MCF 10A (cell line): ENCODE measurements at regions of chr11 and their contacts with region 1.

Region 1: GRCh38 chr11:45110562-45110961 is 35.9 kb upstream of the PRDM11 start:
- DNase-seq: peak; percentile 81
- H3K4me3 Mint-ChIP-seq: no peak overlapping the region
- H3K27ac Mint-ChIP-seq: no peak overlapping the region
- H3K4me1 Mint-ChIP-seq: no peaks in the 10 kb centered on the region
- H3K27me3 Mint-ChIP-seq: peaks cover 32% of the 10 kb centered on the region
- CTCF ChIP-seq: peak; percentile 61

Region 2: GRCh38 chr11:45133871-45134270 is 23.3 kb after region 1 on chr11:
- CTCF ChIA-PET with region 1: interaction called, 10 read pairs
- POLR2A ChIA-PET with region 1: no interaction called
- intact Hi-C with region 1: no loop called
- DNase-seq: peak; percentile 38
- H3K4me3 Mint-ChIP-seq: no peak overlapping the region
- H3K27ac Mint-ChIP-seq: no peak overlapping the region
- H3K4me1 Mint-ChIP-seq: no peaks in the 10 kb centered on the region
- H3K27me3 Mint-ChIP-seq: peaks cover 36% of the 10 kb centered on the region
- CTCF ChIP-seq: no peak

Region 3: DNA sequence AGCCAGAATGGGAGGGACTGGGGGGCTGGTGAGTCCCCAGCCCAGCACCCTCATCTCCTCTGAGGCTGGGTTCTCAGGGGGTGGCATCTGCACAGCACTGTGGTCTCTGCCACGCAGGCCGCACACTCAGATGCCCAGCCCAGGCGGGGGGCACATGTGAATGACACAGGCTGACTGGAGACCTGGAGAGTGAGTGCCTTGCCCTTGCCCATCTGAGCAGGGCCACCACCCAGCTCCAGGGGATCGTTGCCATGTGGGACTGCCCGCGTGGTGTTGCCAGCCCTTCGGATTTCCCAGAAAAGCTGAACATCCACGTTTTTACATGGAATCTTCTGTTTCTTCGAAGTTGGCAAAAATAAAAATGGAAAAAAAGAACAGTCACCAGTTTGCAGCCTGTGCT is 54.8 kb after region 1 on chr11:
- CTCF ChIA-PET with region 1: no interaction called
- POLR2A ChIA-PET with region 1: no interaction called
- intact Hi-C with region 1: no loop called
- DNase-seq: no peak
- H3K4me3 Mint-ChIP-seq: no peak overlapping the region
- H3K27ac Mint-ChIP-seq: no peak overlapping the region
- H3K4me1 Mint-ChIP-seq: no peaks in the 10 kb centered on the region
- H3K27me3 Mint-ChIP-seq: no peaks in the 10 kb centered on the region
- CTCF ChIP-seq: no peak

Region 4: GRCh38 chr11:45252134-45252855 is 141.7 kb after region 1 on chr11:
- CTCF ChIA-PET with region 1: interaction called, 4 read pairs
- POLR2A ChIA-PET with region 1: no interaction called
- intact Hi-C with region 1: loop called (anchors 1 kb)
- DNase-seq: peak; percentile 73
- H3K4me3 Mint-ChIP-seq: no peak overlapping the region
- H3K27ac Mint-ChIP-seq: no peak overlapping the region
- H3K4me1 Mint-ChIP-seq: no peaks in the 10 kb centered on the region
- H3K27me3 Mint-ChIP-seq: peaks cover 14% of the 10 kb centered on the region
- CTCF ChIP-seq: peak; percentile 87

Region 5: DNA sequence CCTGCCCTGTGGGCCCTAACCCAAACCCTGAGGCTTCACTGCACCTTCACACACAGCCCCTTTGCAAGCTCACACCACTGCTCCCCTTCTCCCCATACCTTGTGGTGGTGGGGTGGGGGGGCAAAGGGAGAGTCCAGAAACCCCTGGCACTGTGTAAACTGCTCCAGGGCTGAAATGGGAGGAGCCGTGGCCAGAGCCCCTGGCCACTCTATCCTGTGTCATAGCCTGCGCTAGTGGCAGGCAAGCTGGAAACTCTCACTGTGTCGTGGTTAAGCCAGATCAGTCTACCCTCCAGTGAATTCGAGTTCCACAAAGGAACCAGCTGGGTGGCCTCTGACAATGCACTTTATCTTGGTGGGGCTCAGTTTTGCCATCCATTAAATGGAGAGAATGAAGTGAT is 183.9 kb after region 1 on chr11:
- CTCF ChIA-PET with region 1: interaction called, 56 read pairs
- POLR2A ChIA-PET with region 1: interaction called, 5 read pairs
- intact Hi-C with region 1: loop called (anchors 1 kb)
- DNase-seq: no peak
- H3K4me3 Mint-ChIP-seq: no peak overlapping the region
- H3K27ac Mint-ChIP-seq: no peak overlapping the region
- H3K4me1 Mint-ChIP-seq: peaks cover 3% of the 10 kb centered on the region
- H3K27me3 Mint-ChIP-seq: peaks cover 15% of the 10 kb centered on the region
- CTCF ChIP-seq: no peak

Region 6: DNA sequence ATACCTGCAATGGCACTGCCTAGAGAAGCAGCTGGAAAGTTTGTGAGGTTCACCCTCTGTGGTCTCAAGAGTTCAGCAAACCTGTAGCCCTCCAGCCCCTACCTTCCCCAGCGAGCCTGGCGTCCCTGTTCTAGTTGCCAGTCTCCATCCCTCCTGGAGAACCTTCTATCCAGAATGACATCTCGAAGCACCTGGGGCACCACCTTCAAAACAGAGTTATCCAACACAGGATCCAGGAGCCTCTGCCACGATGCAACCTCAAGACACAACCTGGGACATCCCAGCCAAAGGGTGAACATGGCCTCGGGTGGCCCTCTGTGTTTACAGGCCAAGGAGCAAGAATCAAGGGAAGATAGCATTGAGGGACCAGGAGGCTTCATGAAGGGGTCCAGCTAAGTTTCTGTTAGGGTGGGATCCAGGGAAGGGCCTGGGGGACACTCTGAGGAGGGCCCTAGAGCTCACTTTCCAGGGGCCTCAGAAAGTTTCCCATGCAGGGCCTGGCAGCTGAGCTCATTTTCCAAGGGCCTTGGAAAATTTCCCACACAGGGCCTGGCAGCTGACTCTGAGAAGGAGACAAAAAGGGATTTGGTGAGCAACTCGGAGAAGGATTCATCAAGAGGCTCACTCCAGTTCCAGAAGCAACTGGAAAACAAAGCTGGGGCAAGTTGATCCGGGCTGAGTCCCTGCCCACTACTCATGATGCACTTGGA is 212.5 kb after region 1 on chr11:
- CTCF ChIA-PET with region 1: interaction called, 81 read pairs
- POLR2A ChIA-PET with region 1: no interaction called
- intact Hi-C with region 1: no loop called
- DNase-seq: no peak
- H3K4me3 Mint-ChIP-seq: no peak overlapping the region
- H3K27ac Mint-ChIP-seq: no peak overlapping the region
- H3K4me1 Mint-ChIP-seq: no peaks in the 10 kb centered on the region
- H3K27me3 Mint-ChIP-seq: peaks cover 51% of the 10 kb centered on the region
- CTCF ChIP-seq: no peak